ENCODE measurements at regions of chr1 and their contacts with region 1.

Region 1: DNA sequence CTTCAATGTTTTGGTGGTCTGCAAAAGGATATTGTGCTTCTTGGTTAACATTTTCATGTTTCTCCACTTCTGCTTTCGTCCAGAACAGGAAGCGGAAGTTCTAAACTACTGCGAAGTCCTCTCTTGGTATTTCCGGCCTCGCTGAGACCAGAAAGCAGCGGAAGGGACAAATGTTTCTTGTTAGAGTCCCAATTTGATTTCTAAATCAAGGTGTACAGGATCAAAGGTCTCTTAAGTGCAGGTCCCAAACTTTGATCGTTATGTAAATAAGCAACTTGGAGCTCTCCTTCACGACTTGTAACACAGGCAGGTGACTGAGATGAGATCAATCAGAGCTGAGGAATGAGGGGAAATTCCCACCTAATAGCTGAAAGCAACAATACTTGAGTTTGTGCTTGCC is 40.1 kb upstream of the HMCN1 start:
- DNase-seq: peak; percentile 88
- ATAC-seq: peak; percentile 81
- H3K4me3 ChIP-seq: peak overlapping the region; percentile 30 to 67 (median 52)
- H3K4me3 Mint-ChIP-seq: peak overlapping the region; percentile 91
- H3K27ac ChIP-seq: peak overlapping the region; percentile 95 to 96
- H3K27ac Mint-ChIP-seq: peak overlapping the region; percentile 98
- H3K4me1 ChIP-seq: peaks cover 18 to 19% of the 10 kb centered on the region in 2 donors
- H3K4me1 Mint-ChIP-seq: peaks cover 22% of the 10 kb centered on the region
- H3K27me3 ChIP-seq: peaks cover 0 to 2% (median 0%) of the 10 kb centered on the region in 4 experiments
- H3K27me3 Mint-ChIP-seq: peaks cover 25% of the 10 kb centered on the region
- CTCF ChIP-seq: no peak

Region 2: DNA sequence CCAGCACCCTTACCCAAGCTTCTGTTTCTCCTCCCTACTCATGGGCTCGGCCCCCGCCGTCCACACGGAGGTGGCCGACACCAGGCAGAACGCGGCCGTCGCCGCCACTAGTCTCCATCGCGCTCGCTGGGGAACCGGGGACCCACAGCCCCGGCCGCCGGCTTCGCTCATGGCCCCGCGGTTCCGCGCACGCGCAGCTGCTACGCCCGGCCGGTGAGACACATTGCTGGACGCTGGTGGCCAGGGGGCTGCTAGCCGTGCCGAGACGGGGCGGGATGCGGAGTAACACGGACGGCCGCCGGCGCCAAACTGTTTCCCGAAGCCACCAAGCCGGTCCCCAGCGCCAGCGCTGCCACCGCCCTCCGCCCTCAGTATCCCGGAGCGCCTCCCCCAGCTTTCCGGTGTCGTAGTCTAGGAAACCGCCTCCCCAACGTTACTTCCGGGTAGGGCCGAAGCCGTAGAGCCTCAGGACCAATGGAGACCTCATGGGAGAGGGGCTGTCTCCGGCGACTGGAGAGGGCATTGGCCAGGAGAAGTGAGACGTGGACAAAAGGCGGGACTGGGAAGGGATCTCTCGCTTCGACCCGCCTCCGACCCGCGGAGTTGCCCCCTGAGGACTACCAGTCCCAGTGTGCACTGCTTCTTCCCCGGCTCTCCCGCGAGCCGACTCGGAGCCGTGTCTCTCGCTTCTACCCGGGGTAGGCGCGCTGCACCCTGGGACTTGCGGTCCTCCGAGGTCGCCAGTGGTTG is 939.4 kb before region 1 on chr1 and contains the start of gene EDEM3:
- CTCF ChIA-PET with region 1: interaction called, 3 read pairs
- POLR2A ChIA-PET with region 1: no interaction called
- intact Hi-C with region 1: loop called (anchors 1 kb)
- DNase-seq: peak; percentile 98
- ATAC-seq: peak; percentile 94
- H3K4me3 ChIP-seq: peak within 1 kb of the TSS; percentile 76 to 98 (median 93)
- H3K4me3 Mint-ChIP-seq: peak within 1 kb of the TSS; percentile 95
- H3K27ac ChIP-seq: peak within 1 kb of the TSS; percentile 68 to 86
- H3K27ac Mint-ChIP-seq: peak within 1 kb of the TSS; percentile 94
- H3K4me1 ChIP-seq: peaks cover 16% of the 10 kb centered on the region in 2 donors
- H3K4me1 Mint-ChIP-seq: peaks cover 26% of the 10 kb centered on the region
- H3K27me3 ChIP-seq: peaks cover 0 to 7% (median 1%) of the 10 kb centered on the region in 4 experiments
- H3K27me3 Mint-ChIP-seq: peaks cover 9% of the 10 kb centered on the region
- CTCF ChIP-seq: no peak
- total RNA-seq, gene EDEM3: 20.9 and 23.1 TPM in 2 replicates

Region 3: GRCh38 chr1:184982002-184982954 is 711.8 kb before region 1 on chr1:
- CTCF ChIA-PET with region 1: no interaction called
- POLR2A ChIA-PET with region 1: no interaction called
- intact Hi-C with region 1: loop called (anchors 5 kb)
- DNase-seq: peak; percentile 80
- ATAC-seq: peak; percentile 98
- H3K4me3 ChIP-seq: no peak overlapping the region
- H3K4me3 Mint-ChIP-seq: no peak overlapping the region
- H3K27ac ChIP-seq: no peak overlapping the region
- H3K27ac Mint-ChIP-seq: no peak overlapping the region
- H3K4me1 ChIP-seq: peaks cover 0 to 3% of the 10 kb centered on the region in 2 donors
- H3K4me1 Mint-ChIP-seq: peaks cover 2% of the 10 kb centered on the region
- H3K27me3 ChIP-seq: no peaks in the 10 kb centered on the region
- H3K27me3 Mint-ChIP-seq: peaks cover 11% of the 10 kb centered on the region
- CTCF ChIP-seq: peak; percentile 93

Region 4: DNA sequence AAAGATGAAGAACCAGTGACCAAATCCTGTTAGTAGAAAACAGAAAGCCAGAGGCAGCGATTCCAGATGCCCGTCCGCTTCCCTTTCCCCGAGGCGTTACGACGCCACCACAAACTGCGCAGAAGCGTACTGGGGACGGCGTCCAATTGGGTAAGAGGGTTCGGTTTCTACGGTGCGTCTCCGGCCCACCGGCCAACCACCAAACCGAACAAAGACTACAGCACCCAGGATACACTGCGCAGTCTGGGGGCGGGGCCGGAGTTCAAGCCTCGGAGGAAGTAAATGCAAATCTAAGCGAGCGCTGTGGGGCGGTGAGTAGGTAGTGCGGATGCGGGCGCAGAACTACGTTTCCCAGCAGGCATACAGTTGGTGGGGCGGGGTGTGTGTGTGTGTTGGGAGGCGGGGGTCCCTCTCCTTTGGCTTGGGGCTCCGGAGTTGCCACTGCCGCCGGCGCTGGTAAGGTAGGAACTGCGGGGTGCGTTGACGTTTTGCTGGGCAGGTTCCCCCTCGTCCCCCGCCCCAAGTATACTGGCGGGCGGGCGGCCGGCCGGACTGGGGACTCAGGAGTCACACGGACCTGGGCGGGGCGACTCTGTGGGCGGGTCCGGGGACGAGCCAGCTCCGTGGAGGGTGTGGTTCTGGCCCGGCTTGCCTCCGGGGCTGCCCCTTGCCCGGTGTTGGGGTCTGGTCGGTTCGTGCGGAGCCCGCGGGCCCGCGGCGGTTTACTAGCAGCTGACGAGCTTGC is 537.1 kb before region 1 on chr1 and contains the starts of genes SWT1 and TRMT1L:
- CTCF ChIA-PET with region 1: interaction called, 11 read pairs
- POLR2A ChIA-PET with region 1: interaction called, 4 read pairs
- intact Hi-C with region 1: loop called (anchors 1 kb)
- DNase-seq: peak; percentile 100
- ATAC-seq: peak; percentile 83
- H3K4me3 ChIP-seq: peak within 1 kb of the TSS; percentile 80 to 99 (median 98)
- H3K4me3 Mint-ChIP-seq: peak within 1 kb of the TSS; percentile 93
- H3K27ac ChIP-seq: peak within 1 kb of the TSS; percentile 98 to 100
- H3K27ac Mint-ChIP-seq: peak within 1 kb of the TSS; percentile 97
- H3K4me1 ChIP-seq: peaks cover 11 to 36% of the 10 kb centered on the region in 2 donors
- H3K4me1 Mint-ChIP-seq: peaks cover 44% of the 10 kb centered on the region
- H3K27me3 ChIP-seq: no peaks in the 10 kb centered on the region
- H3K27me3 Mint-ChIP-seq: no peaks in the 10 kb centered on the region
- CTCF ChIP-seq: no peak
- total RNA-seq, gene SWT1: 8.5 and 9.2 TPM in 2 replicates
- total RNA-seq, gene TRMT1L: 27.5 and 33.2 TPM in 2 replicates

Region 5: DNA sequence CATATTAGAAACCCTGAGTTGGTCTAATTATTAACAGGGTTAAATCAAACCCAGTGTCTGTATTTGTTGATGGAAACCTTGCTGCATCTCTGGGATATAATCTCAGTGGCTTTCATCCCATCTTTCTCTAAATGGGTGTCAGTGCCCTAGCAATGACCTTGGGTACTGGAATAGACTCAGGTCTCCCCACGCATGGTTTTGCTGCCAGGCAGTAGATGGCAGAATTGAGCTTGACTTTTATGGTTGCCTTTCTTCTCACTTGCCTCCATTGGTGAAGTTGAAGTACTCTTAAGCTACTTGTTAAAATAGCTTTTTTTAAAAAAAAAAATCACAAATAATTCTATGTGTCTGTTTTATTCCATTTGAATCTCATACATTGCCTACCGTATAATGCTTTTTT is 41.7 kb before region 1 on chr1:
- CTCF ChIA-PET with region 1: interaction called, 11 read pairs
- POLR2A ChIA-PET with region 1: no interaction called
- intact Hi-C with region 1: no loop called
- DNase-seq: no peak
- ATAC-seq: no peak
- H3K4me3 ChIP-seq: no peak overlapping the region
- H3K4me3 Mint-ChIP-seq: no peak overlapping the region
- H3K27ac ChIP-seq: no peak overlapping the region
- H3K27ac Mint-ChIP-seq: no peak overlapping the region
- H3K4me1 ChIP-seq: no peaks in the 10 kb centered on the region
- H3K4me1 Mint-ChIP-seq: no peaks in the 10 kb centered on the region
- H3K27me3 ChIP-seq: no peaks in the 10 kb centered on the region
- H3K27me3 Mint-ChIP-seq: no peaks in the 10 kb centered on the region
- CTCF ChIP-seq: no peak

Region 6: GRCh38 chr1:185663332-185663731 is 30.7 kb before region 1 on chr1:
- CTCF ChIA-PET with region 1: no interaction called
- POLR2A ChIA-PET with region 1: no interaction called
- intact Hi-C with region 1: no loop called
- DNase-seq: no peak
- ATAC-seq: no peak
- H3K4me3 ChIP-seq: no peak overlapping the region
- H3K4me3 Mint-ChIP-seq: no peak overlapping the region
- H3K27ac ChIP-seq: no peak overlapping the region
- H3K27ac Mint-ChIP-seq: no peak overlapping the region
- H3K4me1 ChIP-seq: no peaks in the 10 kb centered on the region
- H3K4me1 Mint-ChIP-seq: peaks cover 5% of the 10 kb centered on the region
- H3K27me3 ChIP-seq: no peaks in the 10 kb centered on the region
- H3K27me3 Mint-ChIP-seq: no peaks in the 10 kb centered on the region
- CTCF ChIP-seq: no peak

Region 7: GRCh38 chr1:185727726-185728125 is 33.6 kb after region 1 on chr1:
- CTCF ChIA-PET with region 1: no interaction called
- POLR2A ChIA-PET with region 1: no interaction called
- intact Hi-C with region 1: no loop called
- DNase-seq: no peak
- ATAC-seq: no peak
- H3K4me3 ChIP-seq: no peak overlapping the region
- H3K4me3 Mint-ChIP-seq: no peak overlapping the region
- H3K27ac ChIP-seq: no peak overlapping the region
- H3K27ac Mint-ChIP-seq: no peak overlapping the region
- H3K4me1 ChIP-seq: no peaks in the 10 kb centered on the region
- H3K4me1 Mint-ChIP-seq: no peaks in the 10 kb centered on the region
- H3K27me3 ChIP-seq: peaks cover 0 to 18% (median 6%) of the 10 kb centered on the region in 4 experiments
- H3K27me3 Mint-ChIP-seq: peaks cover 39% of the 10 kb centered on the region
- CTCF ChIP-seq: no peak

Region 8: GRCh38 chr1:185759061-185759460 is 65.0 kb after region 1 on chr1:
- CTCF ChIA-PET with region 1: no interaction called
- POLR2A ChIA-PET with region 1: no interaction called
- intact Hi-C with region 1: no loop called
- DNase-seq: no peak
- ATAC-seq: no peak
- H3K4me3 ChIP-seq: no peak overlapping the region
- H3K4me3 Mint-ChIP-seq: no peak overlapping the region
- H3K27ac ChIP-seq: no peak overlapping the region
- H3K27ac Mint-ChIP-seq: no peak overlapping the region
- H3K4me1 ChIP-seq: no peaks in the 10 kb centered on the region
- H3K4me1 Mint-ChIP-seq: no peaks in the 10 kb centered on the region
- H3K27me3 ChIP-seq: peaks cover 0 to 5% (median 2%) of the 10 kb centered on the region in 4 experiments
- H3K27me3 Mint-ChIP-seq: peaks cover 30% of the 10 kb centered on the region
- CTCF ChIP-seq: no peak

Region 9: GRCh38 chr1:185894791-185895190 is 200.7 kb after region 1 on chr1:
- CTCF ChIA-PET with region 1: no interaction called
- POLR2A ChIA-PET with region 1: no interaction called
- intact Hi-C with region 1: no loop called
- DNase-seq: no peak
- ATAC-seq: no peak
- H3K4me3 ChIP-seq: no peak overlapping the region
- H3K4me3 Mint-ChIP-seq: no peak overlapping the region
- H3K27ac ChIP-seq: no peak overlapping the region
- H3K27ac Mint-ChIP-seq: no peak overlapping the region
- H3K4me1 ChIP-seq: no peaks in the 10 kb centered on the region
- H3K4me1 Mint-ChIP-seq: no peaks in the 10 kb centered on the region
- H3K27me3 ChIP-seq: no peaks in the 10 kb centered on the region
- H3K27me3 Mint-ChIP-seq: no peaks in the 10 kb centered on the region
- CTCF ChIP-seq: no peak

Measured in B cell (primary cell).